CD8-positive, alpha-beta T cell (primary cell): ENCODE measurements at regions of chr19 and their contacts with region 1.

Region 1: DNA sequence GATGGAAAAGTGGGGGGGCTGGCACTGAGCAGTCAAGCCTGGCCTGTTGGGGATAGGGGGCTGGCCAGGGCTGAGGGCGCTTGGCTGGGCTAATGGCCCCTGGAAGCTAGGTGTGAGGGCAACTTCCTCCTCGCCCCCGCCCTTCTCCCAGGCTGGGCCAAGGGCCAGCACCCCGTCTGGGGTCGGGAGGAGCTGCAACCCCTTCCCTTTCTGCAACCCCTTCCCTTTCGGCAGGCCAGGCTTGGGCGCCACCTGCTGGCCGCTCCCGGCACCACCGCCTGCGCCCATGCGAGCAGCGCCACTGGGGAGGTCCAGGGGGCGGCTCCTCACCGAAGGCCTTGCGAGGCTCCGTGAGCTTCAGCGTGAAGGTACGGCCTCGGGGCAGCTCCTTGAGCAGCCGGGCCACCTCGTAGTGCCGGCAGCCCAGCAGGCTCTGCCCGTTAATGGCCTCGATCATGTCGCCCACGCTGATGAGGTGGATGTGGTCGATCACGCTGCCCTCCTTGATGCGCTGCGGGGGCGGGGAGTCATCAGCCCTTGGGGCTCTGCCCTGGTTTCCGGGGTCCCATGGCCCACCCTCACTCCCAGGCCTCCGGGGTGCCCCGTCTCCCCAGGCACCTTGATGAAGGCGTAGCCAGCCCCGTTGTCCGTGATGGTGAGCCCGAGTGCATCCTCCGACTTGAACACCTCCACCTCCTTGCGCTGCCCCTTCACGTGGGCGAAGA is 5.0 kb upstream of the PTGER1 start:
- DNase-seq: peak; percentile 55 to 85 (median 64)
- ATAC-seq: peak; percentile 52
- H3K4me3 ChIP-seq: no peak overlapping the region
- H3K4me3 Mint-ChIP-seq: no peak overlapping the region
- H3K27ac ChIP-seq: no peak overlapping the region
- H3K27ac Mint-ChIP-seq: no peak overlapping the region
- H3K4me1 ChIP-seq: peaks cover 16% of the 10 kb centered on the region
- H3K4me1 Mint-ChIP-seq: peaks cover 16% of the 10 kb centered on the region
- H3K27me3 ChIP-seq: peaks cover 0 to 5% of the 10 kb centered on the region in 2 experiments
- H3K27me3 Mint-ChIP-seq: peaks cover 2% of the 10 kb centered on the region
- CTCF ChIP-seq: peak; percentile 93

Region 2: DNA sequence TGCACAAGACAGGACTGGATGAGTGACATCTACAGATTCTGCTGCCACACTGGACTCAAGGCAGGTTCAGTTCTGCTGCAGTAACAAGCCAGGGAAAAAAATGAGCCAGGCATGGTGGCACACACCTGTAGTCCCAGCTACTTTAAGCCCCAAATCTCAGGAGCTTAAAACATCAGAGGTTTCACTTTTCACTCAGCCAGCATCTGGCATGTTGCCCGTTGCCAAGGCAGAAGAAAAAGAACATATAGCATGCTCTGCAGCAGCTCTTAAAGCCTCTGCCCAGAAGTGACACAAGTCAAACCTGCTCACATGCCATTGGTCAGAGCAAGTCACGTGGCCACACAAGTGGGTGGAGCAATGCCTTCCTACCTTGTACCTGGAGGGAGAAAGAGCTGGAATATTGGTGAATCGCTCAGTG is 113.6 kb before region 1 on chr19:
- CTCF ChIA-PET with region 1: interaction called, 7 read pairs
- POLR2A ChIA-PET with region 1: no interaction called
- intact Hi-C with region 1: loop called (anchors 1 to 5 kb)
- DNase-seq: peak; percentile 83 to 97 (median 90)
- ATAC-seq: peak; percentile 45
- H3K4me3 ChIP-seq: no peak overlapping the region
- H3K4me3 Mint-ChIP-seq: peak overlapping the region; percentile 57
- H3K27ac ChIP-seq: peak overlapping the region; percentile 98 to 100
- H3K27ac Mint-ChIP-seq: peak overlapping the region; percentile 99
- H3K4me1 ChIP-seq: peaks cover 81% of the 10 kb centered on the region
- H3K4me1 Mint-ChIP-seq: peaks cover 68% of the 10 kb centered on the region
- H3K27me3 ChIP-seq: no peaks in the 10 kb centered on the region
- H3K27me3 Mint-ChIP-seq: no peaks in the 10 kb centered on the region
- CTCF ChIP-seq: no peak

Region 3: DNA sequence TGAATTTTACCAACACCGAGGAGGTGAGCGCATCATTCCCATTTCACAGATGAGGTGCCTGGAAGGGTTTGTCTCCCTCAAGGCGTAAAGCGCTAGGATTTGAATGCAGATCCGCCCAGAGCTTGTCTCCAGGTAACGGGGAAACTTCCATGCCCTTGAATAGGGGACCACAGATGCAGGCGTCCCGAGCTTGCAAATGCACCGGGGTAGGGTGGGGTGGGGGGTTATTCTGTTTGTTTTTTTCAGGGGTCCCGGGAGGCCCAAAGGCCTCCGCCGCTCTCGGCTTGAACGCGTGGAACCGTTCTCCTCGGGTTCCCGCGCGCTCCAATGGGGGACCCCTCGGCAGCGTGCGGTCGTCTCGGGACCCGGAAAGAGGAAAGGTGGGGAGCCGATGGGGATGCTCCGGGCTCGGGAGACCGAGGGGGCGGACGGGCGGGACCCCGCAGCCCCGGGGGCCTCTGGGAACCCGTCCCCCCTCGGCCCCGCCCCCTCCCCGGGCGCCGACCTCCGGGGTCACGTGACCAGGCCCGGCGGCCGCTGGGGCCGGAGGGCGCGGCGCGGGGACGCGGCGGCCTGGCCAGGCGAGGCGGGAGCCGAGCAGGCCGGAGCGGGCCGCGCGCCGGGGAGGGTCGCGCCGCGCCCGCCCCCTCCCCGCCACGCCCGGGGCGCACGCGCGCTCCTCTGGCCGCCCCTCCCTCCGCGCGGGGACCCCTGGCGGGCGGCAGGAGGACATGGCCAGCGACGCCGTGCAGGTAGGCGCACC is 47.2 kb before region 1 on chr19 and contains the start of gene PKN1:
- CTCF ChIA-PET with region 1: interaction called, 39 read pairs
- POLR2A ChIA-PET with region 1: no interaction called
- intact Hi-C with region 1: no loop called
- DNase-seq: peak in 7 of 9 experiments; percentile 39 to 72 (median 52)
- ATAC-seq: peak; percentile 18
- H3K4me3 ChIP-seq: peak within 1 kb of the TSS; percentile 83 to 85
- H3K4me3 Mint-ChIP-seq: peak within 1 kb of the TSS; percentile 89
- H3K27ac ChIP-seq: peak within 1 kb of the TSS; percentile 68 to 85
- H3K27ac Mint-ChIP-seq: peak within 1 kb of the TSS; percentile 90
- H3K4me1 ChIP-seq: peaks cover 43% of the 10 kb centered on the region
- H3K4me1 Mint-ChIP-seq: peaks cover 39% of the 10 kb centered on the region
- H3K27me3 ChIP-seq: no peaks in the 10 kb centered on the region
- H3K27me3 Mint-ChIP-seq: no peaks in the 10 kb centered on the region
- CTCF ChIP-seq: no peak
- total RNA-seq, gene PKN1: 152 to 158 TPM

Region 4: DNA sequence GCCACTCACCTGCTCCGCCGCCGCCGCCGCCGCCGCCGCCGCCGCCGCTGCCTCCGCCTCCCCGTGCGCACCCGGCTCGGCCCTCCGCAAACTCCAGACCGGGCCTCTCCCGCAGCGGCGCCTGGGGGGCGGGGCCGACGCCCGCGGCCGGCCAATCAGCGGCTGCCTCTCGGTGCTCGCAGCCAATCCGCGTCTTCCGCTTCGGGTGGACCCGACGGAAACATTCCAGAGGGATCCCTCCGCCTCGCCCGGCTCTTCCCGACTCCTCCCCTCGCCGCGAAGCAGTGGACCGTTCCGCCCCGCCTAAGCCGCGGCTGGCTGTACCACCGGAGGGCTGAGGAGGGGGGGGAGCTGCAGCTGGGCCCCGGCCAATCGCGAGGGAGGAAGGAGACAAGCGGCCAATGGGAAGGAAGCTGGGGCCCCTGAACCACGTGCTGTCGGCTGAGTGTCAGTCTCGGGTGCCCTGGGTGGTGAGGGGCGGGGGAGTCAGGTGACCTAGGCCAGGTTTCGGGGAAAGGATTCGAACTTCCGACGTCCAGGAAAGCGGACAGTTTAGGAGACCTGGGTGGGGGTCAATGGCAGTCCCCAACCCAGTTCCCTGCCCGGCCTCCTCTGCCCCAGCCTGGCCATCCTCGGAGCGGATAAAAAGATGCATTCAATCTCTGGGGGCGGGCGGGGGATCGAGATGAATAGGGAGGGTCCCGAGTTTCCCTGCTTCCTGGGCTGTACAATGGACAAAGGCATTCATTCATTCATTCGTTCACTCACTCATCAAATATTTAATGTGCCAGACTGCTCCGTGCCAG is 16.1 kb after region 1 on chr19 and contains the start of gene GIPC1:
- CTCF ChIA-PET with region 1: interaction called, 19 read pairs
- POLR2A ChIA-PET with region 1: interaction called, 4 read pairs
- intact Hi-C with region 1: no loop called
- DNase-seq: peak; percentile 53 to 89 (median 80)
- ATAC-seq: peak; percentile 86
- H3K4me3 ChIP-seq: peak within 1 kb of the TSS; percentile 62 to 97
- H3K4me3 Mint-ChIP-seq: peak within 1 kb of the TSS; percentile 81
- H3K27ac ChIP-seq: peak within 1 kb of the TSS; percentile 42 to 58
- H3K27ac Mint-ChIP-seq: peak within 1 kb of the TSS; percentile 90
- H3K4me1 ChIP-seq: peaks cover 19% of the 10 kb centered on the region
- H3K4me1 Mint-ChIP-seq: peaks cover 24% of the 10 kb centered on the region
- H3K27me3 ChIP-seq: no peaks in the 10 kb centered on the region
- H3K27me3 Mint-ChIP-seq: no peaks in the 10 kb centered on the region
- CTCF ChIP-seq: no peak
- total RNA-seq, gene GIPC1: 15.6 to 16.0 TPM

Region 5: DNA sequence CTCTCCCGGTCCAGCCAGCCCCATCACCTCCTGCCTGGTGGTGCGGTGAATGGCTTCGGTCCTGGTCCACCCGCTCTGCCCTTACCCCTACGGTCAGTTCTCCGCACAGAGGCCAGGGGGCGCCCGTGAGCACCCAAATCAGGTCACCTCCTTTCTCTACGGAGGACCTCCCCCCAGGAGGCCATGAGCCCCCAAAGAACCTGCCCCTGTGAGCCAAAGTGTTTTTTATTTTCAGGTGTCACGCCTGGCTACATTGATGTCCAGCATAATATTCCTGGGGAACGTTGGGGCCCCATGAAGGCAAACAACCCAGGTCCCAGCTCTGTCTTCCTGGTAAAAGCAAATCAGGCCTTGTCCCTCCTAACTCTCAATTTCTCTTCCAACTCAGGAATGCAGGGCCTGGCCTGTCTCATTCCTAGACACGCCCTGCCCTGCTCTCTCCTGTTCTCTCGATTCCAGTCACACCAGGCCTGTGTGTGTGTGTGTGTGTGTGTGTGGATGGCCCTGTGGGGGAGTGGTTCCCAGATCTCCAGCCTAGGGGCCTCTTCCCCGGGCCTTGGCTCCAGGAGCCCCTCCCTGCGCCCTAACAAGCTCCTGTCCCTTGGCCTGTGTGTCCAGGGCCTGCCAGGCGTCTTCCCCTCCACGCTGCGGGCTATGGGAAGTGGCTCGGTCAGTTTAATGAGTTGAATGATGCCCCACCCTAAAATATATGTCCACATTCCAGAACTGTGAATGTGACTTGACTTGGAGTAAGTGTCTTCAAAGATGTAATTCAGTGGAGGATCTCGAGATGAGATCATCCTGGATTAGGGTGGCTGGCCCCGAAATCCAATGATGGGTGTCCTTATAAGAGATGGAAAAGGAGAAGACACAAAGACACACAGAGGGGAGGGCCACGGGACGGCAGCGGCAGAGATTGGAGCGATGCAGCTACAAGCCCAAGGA is 25.6 kb after region 1 on chr19:
- CTCF ChIA-PET with region 1: interaction called, 11 read pairs
- POLR2A ChIA-PET with region 1: interaction called, 3 read pairs
- intact Hi-C with region 1: no loop called
- DNase-seq: peak; percentile 50 to 87 (median 76)
- ATAC-seq: peak; percentile 51
- H3K4me3 ChIP-seq: peak overlapping the region in 1 of 2 experiments; percentile 25
- H3K4me3 Mint-ChIP-seq: peak overlapping the region; percentile 56
- H3K27ac ChIP-seq: peak overlapping the region; percentile 62 to 76
- H3K27ac Mint-ChIP-seq: peak overlapping the region; percentile 96
- H3K4me1 ChIP-seq: peaks cover 49% of the 10 kb centered on the region
- H3K4me1 Mint-ChIP-seq: peaks cover 64% of the 10 kb centered on the region
- H3K27me3 ChIP-seq: no peaks in the 10 kb centered on the region
- H3K27me3 Mint-ChIP-seq: no peaks in the 10 kb centered on the region
- CTCF ChIP-seq: peak; percentile 82